Activated CD4-positive, alpha-beta memory T cell treated with anti-CD3 and anti-CD28 coated beads for 36 hours (primary cell): ENCODE measurements at regions of chr9 and their contacts with region 1.

Region 1: GRCh38 chr9:71768388-71769174 is at the start of gene CEMIP2:
- DNase-seq: peak; percentile 91
- H3K4me3 Mint-ChIP-seq: peak within 1 kb of the TSS; percentile 87
- H3K27ac Mint-ChIP-seq: peak within 1 kb of the TSS; percentile 91
- H3K4me1 Mint-ChIP-seq: peaks cover 29% of the 10 kb centered on the region
- H3K27me3 Mint-ChIP-seq: no peaks in the 10 kb centered on the region
- total RNA-seq, gene CEMIP2: 56.5 to 70.1 TPM

Region 2: DNA sequence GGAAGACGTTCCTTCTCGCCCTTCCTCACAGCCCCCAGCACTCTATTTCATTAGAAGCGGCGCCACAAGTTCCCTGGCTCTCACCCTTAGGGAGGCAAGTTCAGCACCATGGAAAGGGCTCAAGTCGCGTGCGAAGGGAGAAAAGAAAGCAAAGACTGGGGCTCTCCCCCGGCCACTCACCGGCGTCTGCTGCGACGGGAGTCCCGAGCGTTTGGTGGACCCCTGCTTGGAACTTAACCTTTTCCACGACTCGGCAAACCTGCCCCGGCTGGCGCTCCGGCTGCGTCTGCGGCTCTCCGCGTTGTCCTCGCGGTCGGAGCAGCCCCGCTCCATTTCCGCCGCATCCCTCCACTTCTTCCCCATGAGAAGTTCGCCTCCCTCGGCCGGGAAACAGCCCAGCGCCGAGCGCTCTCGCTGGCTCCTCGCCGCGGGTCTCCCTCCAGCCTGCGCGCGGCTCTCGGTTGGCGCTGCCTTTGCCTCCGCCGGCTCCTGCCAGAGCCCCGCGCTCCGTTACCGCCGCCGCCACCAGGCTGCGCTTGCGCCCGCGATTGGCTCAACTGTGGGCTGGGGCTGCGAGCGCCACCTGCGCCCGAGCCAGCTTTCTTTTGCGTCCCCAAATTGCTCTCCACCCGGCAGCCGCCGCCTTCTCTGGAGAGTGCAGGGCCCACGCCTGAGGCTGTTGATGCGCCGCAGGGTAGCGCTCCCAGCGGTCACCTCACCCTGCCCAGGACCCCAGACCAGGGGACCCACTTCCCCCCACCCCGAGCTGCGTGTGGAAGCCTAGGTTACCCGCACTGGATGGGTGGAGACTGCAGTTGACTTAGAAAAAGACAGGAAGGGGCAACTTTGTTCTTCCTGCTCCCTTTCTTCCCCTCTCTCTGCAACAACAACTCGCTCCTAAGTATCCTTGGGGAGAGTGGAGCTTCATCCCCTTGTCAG is 321.8 kb before region 1 on chr9:
- CTCF ChIA-PET with region 1: no interaction called
- POLR2A ChIA-PET with region 1: no interaction called
- intact Hi-C with region 1: loop called (anchors 5 kb)
- DNase-seq: peak; percentile 65
- H3K4me3 Mint-ChIP-seq: no peak overlapping the region
- H3K27ac Mint-ChIP-seq: no peak overlapping the region
- H3K4me1 Mint-ChIP-seq: no peaks in the 10 kb centered on the region
- H3K27me3 Mint-ChIP-seq: peaks cover 31% of the 10 kb centered on the region

Region 3: DNA sequence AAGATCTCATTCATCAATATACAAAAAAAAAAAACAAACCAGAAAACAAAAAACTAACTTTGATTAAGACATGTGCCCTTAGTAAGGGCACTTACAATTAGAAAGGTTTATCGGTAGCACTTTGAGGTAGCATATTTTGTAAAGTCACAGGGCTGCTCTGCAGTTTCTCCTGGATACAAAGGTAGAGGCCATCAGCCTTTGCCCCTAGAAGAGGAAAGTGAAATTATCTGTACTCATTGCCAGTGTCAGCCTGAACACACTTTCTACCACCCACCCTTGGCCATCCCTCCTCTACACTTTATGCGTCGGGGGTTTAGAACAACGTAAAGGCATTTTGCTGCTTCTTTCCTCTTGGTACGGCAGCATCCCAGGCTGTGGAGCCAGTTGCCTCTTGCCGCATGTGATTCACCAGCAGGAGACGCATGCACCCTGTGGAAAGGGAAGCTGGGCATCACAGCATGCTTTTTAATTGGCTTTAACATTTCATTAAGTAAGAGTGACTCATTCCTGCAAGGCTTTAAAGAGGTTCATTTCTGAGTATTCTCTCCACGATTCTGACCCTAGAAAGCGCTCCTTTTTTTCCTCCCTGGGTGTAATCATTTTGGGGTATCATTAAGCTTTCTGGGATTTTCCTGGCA is 84.9 kb before region 1 on chr9:
- CTCF ChIA-PET with region 1: interaction called, 3 read pairs
- POLR2A ChIA-PET with region 1: interaction called, 4 read pairs
- intact Hi-C with region 1: loop called (anchors 2 kb)
- DNase-seq: no peak
- H3K4me3 Mint-ChIP-seq: no peak overlapping the region
- H3K27ac Mint-ChIP-seq: no peak overlapping the region
- H3K4me1 Mint-ChIP-seq: peaks cover 38% of the 10 kb centered on the region
- H3K27me3 Mint-ChIP-seq: no peaks in the 10 kb centered on the region

Region 4: DNA sequence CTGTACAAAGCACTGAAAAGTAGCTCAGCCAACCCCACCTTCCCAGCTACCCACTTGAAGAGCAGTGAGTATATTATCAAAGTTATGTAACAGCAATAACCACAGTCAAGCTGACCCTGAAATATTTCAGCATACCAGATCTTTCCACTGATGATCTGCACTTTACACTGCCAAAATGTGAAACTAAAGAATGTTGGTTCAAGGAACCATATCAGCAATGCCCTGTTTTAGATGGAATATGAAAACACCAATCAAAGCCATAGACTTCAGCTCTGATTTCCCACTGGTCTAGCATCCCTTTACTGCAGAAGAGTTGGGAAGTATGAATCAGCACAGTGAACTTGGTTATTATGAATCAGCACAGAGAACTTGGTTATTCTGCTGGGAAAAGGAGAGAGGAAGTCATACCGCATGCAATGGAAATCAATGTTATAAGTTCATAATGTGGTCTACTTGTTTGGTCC is 20.3 kb before region 1 on chr9:
- CTCF ChIA-PET with region 1: interaction called, 3 read pairs
- POLR2A ChIA-PET with region 1: interaction called, 9 read pairs
- intact Hi-C with region 1: loop called (anchors 2 kb)
- DNase-seq: no peak
- H3K4me3 Mint-ChIP-seq: no peak overlapping the region
- H3K27ac Mint-ChIP-seq: peak overlapping the region; percentile 51
- H3K4me1 Mint-ChIP-seq: peaks cover 38% of the 10 kb centered on the region
- H3K27me3 Mint-ChIP-seq: no peaks in the 10 kb centered on the region

Region 5: DNA sequence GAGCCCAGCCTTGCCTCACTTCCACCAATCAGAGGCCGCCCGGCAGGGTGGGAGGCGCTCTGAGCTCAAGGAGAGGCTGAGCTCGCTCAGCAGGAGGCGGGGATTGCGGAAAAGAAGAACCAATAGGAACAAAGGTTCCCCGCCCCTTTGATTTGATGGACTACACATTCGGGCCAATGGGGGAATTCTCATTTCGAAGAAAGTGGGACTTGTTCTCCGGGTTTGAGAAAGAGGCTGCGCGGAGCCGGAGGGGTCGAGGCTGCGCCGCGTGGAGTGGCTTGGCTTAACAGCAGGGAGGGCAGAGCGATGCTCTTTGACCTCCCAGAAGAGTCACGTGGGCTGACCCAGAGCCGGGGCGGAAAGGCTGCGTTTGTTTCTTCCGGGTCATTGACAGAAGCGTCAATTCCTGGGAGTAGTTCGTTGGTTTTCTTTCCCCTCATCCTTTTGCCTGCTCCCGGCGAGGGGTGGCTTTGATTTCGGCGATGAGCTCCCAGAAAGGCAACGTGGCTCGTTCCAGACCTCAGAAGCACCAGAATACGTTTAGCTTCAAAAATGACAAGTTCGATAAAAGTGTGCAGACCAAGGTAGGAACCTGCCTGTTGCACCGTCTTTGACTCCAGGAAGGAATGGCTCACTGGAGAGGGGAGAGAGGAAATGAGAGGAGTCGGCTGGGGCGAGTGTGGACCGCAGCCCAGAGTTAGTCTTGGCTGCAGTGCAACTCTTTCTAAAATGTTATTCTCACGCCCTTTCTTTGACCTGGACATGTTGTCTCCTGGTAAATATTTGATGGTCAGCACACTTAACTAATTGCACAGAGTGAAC is 142.9 kb after region 1 on chr9 and contains the start of gene C9orf85:
- CTCF ChIA-PET with region 1: no interaction called
- POLR2A ChIA-PET with region 1: interaction called, 4 read pairs
- intact Hi-C with region 1: loop called (anchors 1 kb)
- DNase-seq: peak; percentile 98
- H3K4me3 Mint-ChIP-seq: peak within 1 kb of the TSS; percentile 97
- H3K27ac Mint-ChIP-seq: peak within 1 kb of the TSS; percentile 92
- H3K4me1 Mint-ChIP-seq: peaks cover 52% of the 10 kb centered on the region
- H3K27me3 Mint-ChIP-seq: no peaks in the 10 kb centered on the region
- total RNA-seq, gene C9orf85: 7.3 to 7.5 TPM

Region 6: DNA sequence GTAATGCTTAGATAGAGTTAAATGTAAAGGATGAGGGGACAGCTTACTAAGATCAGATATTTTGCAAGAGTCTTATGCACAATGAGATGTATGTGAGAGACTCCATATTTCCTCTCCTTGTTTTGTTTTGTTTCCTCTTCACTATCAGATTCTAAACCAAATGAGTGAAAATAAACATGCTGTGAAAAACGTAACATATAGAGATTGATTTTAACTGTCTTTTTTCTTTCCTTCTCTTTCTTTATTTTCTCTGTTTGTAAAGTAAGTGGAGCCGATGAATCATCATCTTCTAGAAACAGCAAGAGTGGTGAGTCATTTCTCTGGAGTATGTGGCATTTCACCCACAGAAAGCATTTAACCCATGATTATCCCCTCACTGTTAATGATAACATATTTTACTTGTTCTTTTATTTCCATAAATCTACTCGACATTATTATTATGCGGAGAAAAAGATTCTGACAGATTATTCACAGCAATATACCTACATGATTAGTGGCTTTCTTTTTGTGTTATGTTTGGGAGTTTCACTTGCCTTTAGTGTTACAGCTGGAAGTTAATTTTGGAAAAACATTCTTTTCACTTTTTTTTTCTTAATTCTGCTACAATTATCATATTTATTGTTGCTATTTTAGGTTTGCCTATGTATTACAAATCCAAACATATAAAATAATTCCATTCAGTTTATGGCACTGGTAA is 1380.9 kb after region 1 on chr9:
- CTCF ChIA-PET with region 1: no interaction called
- POLR2A ChIA-PET with region 1: no interaction called
- intact Hi-C with region 1: loop called (anchors 5 kb)
- DNase-seq: no peak
- H3K4me3 Mint-ChIP-seq: peak overlapping the region; percentile 55
- H3K27ac Mint-ChIP-seq: peak overlapping the region; percentile 86
- H3K4me1 Mint-ChIP-seq: peaks cover 66% of the 10 kb centered on the region
- H3K27me3 Mint-ChIP-seq: no peaks in the 10 kb centered on the region